Activated naive CD4-positive, alpha-beta T cell treated with anti-CD3 and anti-CD28 coated beads, Interleukin-2, amount 10 ng/mL, durations not matched to agents 7 days and 5 days (primary cell): ENCODE measurements at regions of chr1 and their contacts with region 1.

Region 1: DNA sequence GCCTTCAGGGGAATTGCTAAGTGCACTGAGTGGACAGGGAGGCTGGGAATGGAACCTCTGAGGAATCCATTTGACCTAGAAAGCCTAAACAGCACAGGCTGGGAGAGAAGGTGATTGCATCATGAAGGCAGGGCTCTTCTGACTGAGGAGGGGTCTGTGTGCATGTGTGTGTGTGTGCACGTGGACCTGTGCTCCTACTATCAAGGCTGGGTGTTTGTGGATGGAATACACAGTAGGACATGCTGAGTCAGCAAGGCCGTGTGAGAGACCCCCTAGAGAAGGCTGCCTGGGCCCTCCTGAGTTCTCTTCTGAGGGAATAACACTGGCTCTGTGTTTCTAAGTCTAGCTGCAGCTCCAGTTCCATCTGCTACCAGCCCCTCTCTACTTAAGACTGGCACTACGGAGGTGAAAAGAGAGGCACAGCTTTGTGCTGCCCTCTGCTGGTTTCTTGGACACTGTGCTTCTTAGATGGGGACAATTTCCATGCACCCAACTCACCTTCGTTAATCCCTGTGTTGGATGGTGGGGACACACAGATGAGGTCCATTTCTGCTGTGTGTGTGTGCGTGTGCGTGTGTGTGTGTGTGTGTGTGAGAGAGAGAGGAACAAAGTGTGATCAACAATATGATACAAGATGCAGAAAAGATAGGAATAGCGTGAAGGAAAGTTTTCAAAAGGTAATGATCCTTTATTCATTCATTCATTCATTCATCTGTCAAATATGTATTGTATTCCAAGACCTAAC is 6.2 kb upstream of the EFCAB14 start:
- DNase-seq: peak; percentile 81
- H3K4me3 Mint-ChIP-seq: no peak overlapping the region
- H3K27ac Mint-ChIP-seq: no peak overlapping the region
- H3K4me1 Mint-ChIP-seq: peaks cover 3% of the 10 kb centered on the region
- H3K27me3 Mint-ChIP-seq: peaks cover 33% of the 10 kb centered on the region

Region 2: DNA sequence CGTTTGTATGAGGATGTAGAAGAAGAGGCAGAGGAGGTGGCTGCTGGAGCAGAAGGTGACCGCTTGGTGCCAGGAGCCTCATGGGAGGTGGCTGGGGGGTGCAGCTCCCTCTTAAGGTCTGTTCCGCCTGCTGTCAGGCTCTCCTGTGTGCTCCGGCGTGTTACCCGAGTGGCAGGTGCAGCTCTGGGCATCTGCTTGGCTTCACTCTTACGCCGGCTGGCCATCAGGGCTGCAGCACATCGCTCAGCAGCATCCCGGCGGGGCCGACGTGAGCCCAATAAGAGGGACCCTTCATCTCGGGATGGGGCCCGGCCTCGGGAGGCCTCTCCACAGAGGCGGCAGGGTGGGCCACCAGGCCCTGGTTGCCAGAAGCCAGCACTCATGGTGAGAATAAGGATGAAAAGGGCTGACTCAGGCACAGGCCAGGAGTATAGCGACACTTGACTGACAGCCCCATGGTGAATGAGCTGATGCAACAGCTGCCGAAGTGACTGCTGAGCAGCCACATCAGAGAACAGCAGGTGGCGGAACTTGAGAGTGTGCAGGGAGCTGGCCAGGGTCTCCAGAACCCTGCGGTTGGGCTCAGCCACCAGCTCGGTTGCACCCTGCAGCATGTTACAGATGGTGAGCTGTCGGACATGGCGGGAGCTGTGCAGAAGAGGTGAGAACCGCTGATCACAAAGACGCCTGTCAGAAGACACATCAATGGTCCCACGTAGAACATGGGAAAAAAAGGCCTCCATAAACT is 439.3 kb before region 1 on chr1:
- CTCF ChIA-PET with region 1: no interaction called
- DNase-seq: peak; percentile 57
- H3K4me3 Mint-ChIP-seq: no peak overlapping the region
- H3K27ac Mint-ChIP-seq: peak overlapping the region; percentile 74
- H3K4me1 Mint-ChIP-seq: peaks cover 28% of the 10 kb centered on the region
- H3K27me3 Mint-ChIP-seq: no peaks in the 10 kb centered on the region

Region 3: GRCh38 chr1:46547481-46548383 is 177.4 kb before region 1 on chr1:
- CTCF ChIA-PET with region 1: interaction called, 10 read pairs
- DNase-seq: peak; percentile 28
- H3K4me3 Mint-ChIP-seq: no peak overlapping the region
- H3K27ac Mint-ChIP-seq: peak overlapping the region; percentile 39
- H3K4me1 Mint-ChIP-seq: peaks cover 13% of the 10 kb centered on the region
- H3K27me3 Mint-ChIP-seq: peaks cover 80% of the 10 kb centered on the region

Region 4: DNA sequence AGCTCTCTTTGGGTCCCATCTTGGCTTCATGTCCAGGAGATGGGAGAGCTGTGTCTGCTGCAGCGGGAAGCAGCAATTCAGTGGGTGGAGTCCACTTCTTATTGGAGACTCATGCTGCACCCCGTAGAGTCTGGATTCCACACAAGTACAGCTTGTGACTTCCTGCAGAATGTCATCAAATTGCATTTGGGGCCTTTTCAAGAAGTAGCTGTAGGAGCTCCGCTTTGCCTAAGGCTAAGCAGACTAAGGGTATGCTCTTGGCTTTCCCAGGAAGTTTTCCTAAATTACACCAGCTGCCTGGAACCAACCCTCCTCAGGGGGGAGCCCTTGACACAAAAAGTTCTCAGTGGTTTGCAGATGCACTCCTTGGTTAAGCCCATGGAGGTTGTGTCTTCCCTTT is 102.8 kb before region 1 on chr1:
- CTCF ChIA-PET with region 1: interaction called, 19 read pairs
- DNase-seq: peak; percentile 37
- H3K4me3 Mint-ChIP-seq: no peak overlapping the region
- H3K27ac Mint-ChIP-seq: no peak overlapping the region
- H3K4me1 Mint-ChIP-seq: peaks cover 9% of the 10 kb centered on the region
- H3K27me3 Mint-ChIP-seq: peaks cover 25% of the 10 kb centered on the region

Region 5: GRCh38 chr1:46735708-46736324 is 10.7 kb after region 1 on chr1:
- CTCF ChIA-PET with region 1: no interaction called
- DNase-seq: peak; percentile 59
- H3K4me3 Mint-ChIP-seq: no peak overlapping the region
- H3K27ac Mint-ChIP-seq: no peak overlapping the region
- H3K4me1 Mint-ChIP-seq: no peaks in the 10 kb centered on the region
- H3K27me3 Mint-ChIP-seq: peaks cover 17% of the 10 kb centered on the region